ENCODE measurements at regions of chr6 and their contacts with region 1.

Region 1: DNA sequence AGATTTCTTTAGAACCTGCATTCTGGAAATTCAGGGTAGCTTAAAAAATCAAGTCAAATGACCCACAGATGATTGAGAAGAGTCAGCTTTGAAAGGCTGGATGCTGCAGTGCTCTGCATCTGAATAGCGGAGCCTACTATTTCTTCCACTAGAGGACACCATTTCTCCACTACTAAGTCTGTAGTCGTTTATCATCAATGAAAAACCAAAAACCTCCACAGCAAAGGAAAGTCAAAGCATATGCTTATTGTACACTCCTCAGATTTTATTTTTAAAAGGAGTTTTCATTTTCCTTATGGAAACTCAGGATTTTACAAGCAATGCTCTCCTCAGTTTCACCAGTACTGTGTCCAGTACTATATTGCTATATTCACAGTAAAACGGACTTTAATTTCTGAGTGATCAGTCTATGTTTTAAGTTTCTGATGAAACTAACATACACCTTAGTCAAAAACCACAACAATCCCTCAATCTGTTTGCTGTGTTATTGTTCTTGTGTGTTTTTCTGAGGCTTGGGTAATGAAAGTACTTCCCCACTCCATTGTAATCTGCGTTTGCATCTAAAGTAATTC is 50.5 kb upstream of the ENPP5 start:
- DNase-seq: peak; percentile 11
- ATAC-seq: peak; percentile 57
- H3K4me3 Mint-ChIP-seq: no peak overlapping the region
- H3K27ac Mint-ChIP-seq: peak overlapping the region; percentile 67
- H3K4me1 Mint-ChIP-seq: peaks cover 26% of the 10 kb centered on the region
- H3K27me3 Mint-ChIP-seq: peaks cover 8% of the 10 kb centered on the region

Region 2: DNA sequence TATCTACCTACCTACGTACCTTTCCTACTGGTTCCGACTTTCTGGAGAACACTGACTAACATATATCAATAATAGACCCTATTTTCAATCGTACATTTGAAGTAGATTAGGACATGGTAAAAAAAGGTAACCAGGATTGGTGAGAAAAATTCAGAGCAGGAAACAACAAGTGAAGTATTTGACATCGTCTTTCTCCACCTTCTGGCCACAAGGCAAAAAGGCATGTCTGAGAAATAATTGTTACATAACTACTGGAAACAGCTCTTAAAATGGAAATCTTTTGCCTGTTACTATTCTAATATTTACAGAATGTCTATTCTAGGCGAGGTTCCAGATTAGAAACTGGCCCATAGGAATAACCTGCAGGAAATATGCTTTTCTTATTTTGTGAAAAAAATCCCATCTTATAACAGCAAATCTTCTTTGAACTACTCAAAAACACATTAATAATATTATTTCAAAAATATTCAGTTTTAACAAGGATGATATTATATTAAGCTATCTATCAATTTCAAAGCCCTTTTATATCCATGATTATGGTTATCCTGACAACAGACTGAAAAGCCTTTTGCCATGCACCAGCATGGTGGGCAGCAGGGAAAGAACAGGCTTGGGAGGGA is 189.1 kb after region 1 on chr6:
- CTCF ChIA-PET with region 1: interaction called, 15 read pairs
- POLR2A ChIA-PET with region 1: no interaction called
- intact Hi-C with region 1: loop called (anchors 1 kb)
- DNase-seq: peak; percentile 22
- ATAC-seq: no peak
- H3K4me3 Mint-ChIP-seq: no peak overlapping the region
- H3K27ac Mint-ChIP-seq: no peak overlapping the region
- H3K4me1 Mint-ChIP-seq: no peaks in the 10 kb centered on the region
- H3K27me3 Mint-ChIP-seq: peaks cover 5% of the 10 kb centered on the region

Region 3: DNA sequence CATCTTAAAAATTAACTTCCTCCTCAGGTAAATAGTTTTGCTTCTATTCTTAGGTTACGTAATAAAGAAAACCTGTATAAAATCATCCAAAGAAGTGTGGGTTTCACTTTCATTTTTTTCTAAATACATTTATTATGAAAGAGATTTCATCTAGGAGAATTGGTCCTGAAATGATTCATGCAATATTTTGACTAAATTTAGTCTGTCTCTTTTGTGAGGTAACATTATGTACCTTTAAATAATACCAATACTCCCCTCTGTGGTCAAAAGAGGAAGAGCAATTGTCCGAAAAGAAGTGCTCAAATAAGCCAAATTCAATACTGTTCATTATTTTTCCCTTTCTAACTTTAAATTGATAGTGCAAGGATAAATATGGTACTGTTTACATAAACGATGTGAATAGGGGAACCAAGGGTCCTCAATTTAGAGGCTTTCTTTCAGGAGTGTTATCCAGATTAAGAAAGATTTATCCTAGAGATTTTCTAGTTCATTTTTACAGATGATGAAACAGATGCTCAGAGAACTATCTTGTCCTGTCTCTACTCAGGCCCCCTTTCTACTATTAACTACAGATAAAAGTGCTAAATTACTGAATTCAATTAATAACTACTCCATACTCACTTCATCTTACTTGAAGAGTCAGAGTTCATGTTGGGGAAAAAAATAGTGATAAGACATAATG is 405.1 kb after region 1 on chr6:
- CTCF ChIA-PET with region 1: no interaction called
- POLR2A ChIA-PET with region 1: no interaction called
- intact Hi-C with region 1: loop called (anchors 1 to 2 kb)
- DNase-seq: no peak
- ATAC-seq: peak; percentile 75
- H3K4me3 Mint-ChIP-seq: no peak overlapping the region
- H3K27ac Mint-ChIP-seq: no peak overlapping the region
- H3K4me1 Mint-ChIP-seq: peaks cover 4% of the 10 kb centered on the region
- H3K27me3 Mint-ChIP-seq: peaks cover 21% of the 10 kb centered on the region

Region 4: GRCh38 chr6:46781478-46782378 is 560.4 kb after region 1 on chr6:
- CTCF ChIA-PET with region 1: no interaction called
- POLR2A ChIA-PET with region 1: no interaction called
- intact Hi-C with region 1: loop called (anchors 2 to 5 kb)
- DNase-seq: peak; percentile 61
- ATAC-seq: peak; percentile 19
- H3K4me3 Mint-ChIP-seq: no peak overlapping the region
- H3K27ac Mint-ChIP-seq: no peak overlapping the region
- H3K4me1 Mint-ChIP-seq: no peaks in the 10 kb centered on the region
- H3K27me3 Mint-ChIP-seq: peaks cover 6% of the 10 kb centered on the region

Region 5: GRCh38 chr6:47309291-47310130 is 1088.2 kb after region 1 on chr6 and contains the start of gene TNFRSF21:
- CTCF ChIA-PET with region 1: no interaction called
- POLR2A ChIA-PET with region 1: no interaction called
- intact Hi-C with region 1: loop called in 1 of 2 experiments (anchors 10 kb)
- DNase-seq: peak; percentile 93
- ATAC-seq: peak; percentile 97
- H3K4me3 Mint-ChIP-seq: peak within 1 kb of the TSS; percentile 66
- H3K27ac Mint-ChIP-seq: peak within 1 kb of the TSS; percentile 42
- H3K4me1 Mint-ChIP-seq: peaks cover 9% of the 10 kb centered on the region
- H3K27me3 Mint-ChIP-seq: peaks cover 33% of the 10 kb centered on the region
- total RNA-seq, gene TNFRSF21: 2.6 to 2.8 TPM

Region 6: GRCh38 chr6:47936820-47937219 is 1715.5 kb after region 1 on chr6:
- CTCF ChIA-PET with region 1: no interaction called
- POLR2A ChIA-PET with region 1: no interaction called
- intact Hi-C with region 1: no loop called
- DNase-seq: no peak
- ATAC-seq: no peak
- H3K4me3 Mint-ChIP-seq: no peak overlapping the region
- H3K27ac Mint-ChIP-seq: no peak overlapping the region
- H3K4me1 Mint-ChIP-seq: no peaks in the 10 kb centered on the region
- H3K27me3 Mint-ChIP-seq: peaks cover 12% of the 10 kb centered on the region

Measured in activated CD4-positive, alpha-beta T cell treated with anti-CD3 and anti-CD28 coated beads for 36 hours (primary cell).